Ovary (tissue), 10 donors: ENCODE measurements at regions of chr13 and their contacts with region 1.

Region 1: DNA sequence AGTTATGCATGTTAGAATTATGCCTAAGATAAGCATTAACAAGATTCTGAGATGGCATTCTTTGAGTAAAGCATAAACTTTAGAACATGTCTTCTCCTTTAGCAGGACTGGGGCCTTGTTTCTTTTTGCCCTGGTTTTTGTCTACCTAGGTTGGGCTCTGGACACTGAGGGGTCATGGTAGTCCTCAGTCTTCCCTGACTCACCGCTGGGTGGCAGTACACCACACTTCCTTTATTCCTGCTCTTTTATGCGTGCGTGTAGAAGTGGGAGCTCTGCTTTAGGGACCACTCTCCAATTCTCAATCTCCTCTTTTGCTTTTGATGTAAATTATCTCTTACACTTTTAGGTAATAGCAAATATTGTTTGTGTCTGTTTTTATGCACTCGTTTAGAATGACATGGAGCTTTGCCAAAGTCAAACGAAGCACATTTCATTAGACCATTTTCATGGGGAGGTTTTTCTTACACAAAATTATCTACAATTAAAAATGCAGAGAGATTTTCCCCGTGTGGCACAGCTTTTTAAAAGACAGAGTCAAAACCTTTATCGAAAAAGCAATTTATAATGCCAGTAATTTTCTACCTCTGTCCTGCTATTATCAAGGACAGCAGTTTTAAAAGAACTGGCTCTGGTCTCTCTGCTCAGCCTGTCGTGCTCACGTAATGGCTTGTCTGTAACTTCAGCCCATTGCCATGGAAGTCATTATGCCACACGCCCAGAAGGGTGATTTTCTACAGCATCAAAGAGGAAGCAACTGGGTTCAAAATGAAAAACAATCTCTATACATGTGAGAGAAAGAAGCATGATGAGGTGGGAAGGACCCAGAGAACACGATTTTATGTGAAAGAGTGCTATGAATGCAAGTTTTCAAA is 413.9 kb downstream of the COG6 start:
- DNase-seq: peak; percentile 78 to 89 (median 83)
- H3K4me3 ChIP-seq: no peak overlapping the region
- H3K27ac ChIP-seq: peak overlapping the region in 1 of 2 donors; percentile 13
- H3K4me1 ChIP-seq: peaks cover 8% of the 10 kb centered on the region
- H3K27me3 ChIP-seq: no peaks in the 10 kb centered on the region
- CTCF ChIP-seq: peak; percentile 42 to 91 (median 76)
- EP300 ChIP-seq: no peak
- POLR2A ChIP-seq: peak; percentile 11

Region 2: DNA sequence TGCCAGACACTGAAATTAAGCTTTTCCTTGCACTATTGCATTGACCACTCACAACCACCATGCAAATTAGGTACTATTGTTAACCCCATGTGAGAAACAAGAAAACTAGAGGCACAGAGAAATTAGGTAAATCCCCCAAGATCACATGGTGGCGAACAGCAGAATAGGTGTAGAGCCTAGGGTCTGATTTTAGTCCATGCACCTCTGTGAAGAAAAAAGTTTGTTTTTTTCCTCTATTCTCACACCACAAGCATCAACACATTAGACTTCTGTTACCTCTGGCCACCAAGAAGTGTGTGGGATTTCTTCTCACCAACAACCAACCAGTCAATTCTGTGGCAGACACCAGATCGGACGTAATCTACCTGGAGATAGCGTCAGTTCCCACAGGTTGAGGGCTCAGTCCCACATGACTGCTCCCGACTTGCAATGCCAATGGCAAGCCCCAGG is 22.1 kb before region 1 on chr13:
- intact Hi-C with region 1: no loop called
- DNase-seq: no peak
- H3K4me3 ChIP-seq: no peak overlapping the region
- H3K27ac ChIP-seq: no peak overlapping the region
- H3K4me1 ChIP-seq: no peaks in the 10 kb centered on the region
- H3K27me3 ChIP-seq: no peaks in the 10 kb centered on the region
- CTCF ChIP-seq: no peak
- EP300 ChIP-seq: no peak
- POLR2A ChIP-seq: no peak

Region 3: DNA sequence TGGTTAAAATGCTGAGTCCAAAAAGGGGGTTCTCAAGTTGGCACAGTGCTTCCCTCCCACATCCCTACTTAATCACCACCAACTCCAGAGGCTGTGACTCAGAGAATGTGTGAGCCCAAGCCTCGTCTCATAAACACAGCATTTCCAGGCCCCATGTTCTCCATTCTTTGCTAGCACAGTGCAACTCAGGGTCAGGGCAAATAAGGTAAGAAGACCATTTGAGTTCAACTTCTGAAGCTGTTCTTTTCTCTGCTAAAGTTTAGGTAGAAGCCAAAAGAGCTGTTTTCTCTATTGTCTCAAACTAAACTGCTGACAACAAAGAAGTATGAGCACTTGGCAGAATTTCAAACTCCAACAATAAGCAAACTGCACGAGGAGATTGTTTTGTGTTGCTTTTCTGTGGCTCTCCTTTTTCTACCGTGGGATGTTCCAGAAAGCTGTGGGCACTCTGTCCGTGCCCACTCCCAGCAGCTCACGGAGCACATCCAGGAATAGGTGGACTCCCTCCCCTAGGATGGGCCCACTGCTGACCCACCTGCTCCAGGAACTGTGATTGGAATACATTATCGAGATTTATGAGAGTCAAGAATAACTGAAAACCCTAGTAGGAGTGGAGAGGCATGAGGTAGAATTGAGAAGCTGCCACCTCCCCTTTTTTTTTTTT is 80.3 kb after region 1 on chr13:
- intact Hi-C with region 1: loop called in 1 of 4 experiments (anchors 10 kb)
- DNase-seq: peak; percentile 40 to 67 (median 54)
- H3K4me3 ChIP-seq: no peak overlapping the region
- H3K27ac ChIP-seq: peak overlapping the region in 1 of 2 donors; percentile 77
- H3K4me1 ChIP-seq: peaks cover 9% of the 10 kb centered on the region
- H3K27me3 ChIP-seq: no peaks in the 10 kb centered on the region
- CTCF ChIP-seq: no peak
- EP300 ChIP-seq: no peak
- POLR2A ChIP-seq: no peak

Region 4: GRCh38 chr13:40230833-40231266 is 161.4 kb after region 1 on chr13:
- intact Hi-C with region 1: loop called in 1 of 4 experiments (anchors 10 kb)
- DNase-seq: no peak
- H3K4me3 ChIP-seq: no peak overlapping the region
- H3K27ac ChIP-seq: peak overlapping the region in 1 of 2 donors; percentile 14
- H3K4me1 ChIP-seq: peaks cover 2% of the 10 kb centered on the region
- H3K27me3 ChIP-seq: no peaks in the 10 kb centered on the region
- CTCF ChIP-seq: no peak
- EP300 ChIP-seq: no peak
- POLR2A ChIP-seq: no peak

Region 5: DNA sequence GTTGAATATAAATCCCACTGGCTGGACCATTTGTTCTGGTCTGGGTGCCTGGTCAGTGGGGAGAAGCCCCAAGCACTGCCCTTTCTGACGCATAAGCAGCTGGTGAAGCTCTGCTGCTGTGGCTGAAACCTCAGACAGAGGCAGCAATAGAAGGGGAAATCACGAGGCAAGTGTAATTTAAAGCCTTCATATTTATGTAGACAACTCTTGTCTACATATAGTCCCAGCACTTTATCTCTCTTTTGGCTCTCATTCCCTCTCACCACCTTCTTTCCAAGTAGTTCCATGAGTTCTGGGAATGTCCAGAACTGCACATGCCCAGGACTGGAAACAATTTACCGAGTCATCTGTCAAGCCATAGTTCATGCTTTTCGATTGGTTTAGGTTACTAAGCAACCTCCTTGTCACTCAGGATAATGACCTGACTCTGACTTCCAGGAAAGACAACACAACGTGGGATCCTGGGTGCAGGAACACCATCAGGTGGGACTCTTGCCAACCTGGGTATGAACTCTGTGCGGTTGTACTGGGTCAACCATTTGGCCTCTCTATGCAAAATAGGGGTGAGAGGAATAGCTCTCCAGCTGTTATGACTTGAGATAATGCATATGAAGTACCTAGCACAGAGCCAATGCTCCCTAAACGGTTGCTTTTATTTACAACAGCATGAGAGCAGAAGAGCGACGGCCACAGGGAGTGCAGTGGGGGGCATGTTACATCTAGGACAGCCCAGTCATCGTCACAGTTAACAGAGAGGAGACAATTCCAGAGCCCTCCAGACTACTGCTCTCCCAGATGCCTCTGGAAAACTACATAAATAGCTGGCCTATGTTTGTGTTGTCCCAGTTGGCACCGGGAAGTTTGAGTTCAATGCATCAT is 275.1 kb after region 1 on chr13:
- intact Hi-C with region 1: no loop called
- DNase-seq: no peak
- H3K4me3 ChIP-seq: no peak overlapping the region
- H3K27ac ChIP-seq: peak overlapping the region in 1 of 2 donors; percentile 46
- H3K4me1 ChIP-seq: peaks cover 14% of the 10 kb centered on the region
- H3K27me3 ChIP-seq: no peaks in the 10 kb centered on the region
- CTCF ChIP-seq: no peak
- EP300 ChIP-seq: no peak
- POLR2A ChIP-seq: no peak

Region 6: GRCh38 chr13:40401911-40402776 is 332.7 kb after region 1 on chr13:
- intact Hi-C with region 1: loop called in 1 of 4 experiments (anchors 5 kb)
- DNase-seq: peak; percentile 95 to 99 (median 98)
- H3K4me3 ChIP-seq: no peak overlapping the region
- H3K27ac ChIP-seq: peak overlapping the region in 1 of 2 donors; percentile 75
- H3K4me1 ChIP-seq: peaks cover 13% of the 10 kb centered on the region
- H3K27me3 ChIP-seq: no peaks in the 10 kb centered on the region
- CTCF ChIP-seq: no peak
- EP300 ChIP-seq: no peak
- POLR2A ChIP-seq: no peak